ENCODE measurements at regions of chr16 and their contacts with region 1.

Region 1: DNA sequence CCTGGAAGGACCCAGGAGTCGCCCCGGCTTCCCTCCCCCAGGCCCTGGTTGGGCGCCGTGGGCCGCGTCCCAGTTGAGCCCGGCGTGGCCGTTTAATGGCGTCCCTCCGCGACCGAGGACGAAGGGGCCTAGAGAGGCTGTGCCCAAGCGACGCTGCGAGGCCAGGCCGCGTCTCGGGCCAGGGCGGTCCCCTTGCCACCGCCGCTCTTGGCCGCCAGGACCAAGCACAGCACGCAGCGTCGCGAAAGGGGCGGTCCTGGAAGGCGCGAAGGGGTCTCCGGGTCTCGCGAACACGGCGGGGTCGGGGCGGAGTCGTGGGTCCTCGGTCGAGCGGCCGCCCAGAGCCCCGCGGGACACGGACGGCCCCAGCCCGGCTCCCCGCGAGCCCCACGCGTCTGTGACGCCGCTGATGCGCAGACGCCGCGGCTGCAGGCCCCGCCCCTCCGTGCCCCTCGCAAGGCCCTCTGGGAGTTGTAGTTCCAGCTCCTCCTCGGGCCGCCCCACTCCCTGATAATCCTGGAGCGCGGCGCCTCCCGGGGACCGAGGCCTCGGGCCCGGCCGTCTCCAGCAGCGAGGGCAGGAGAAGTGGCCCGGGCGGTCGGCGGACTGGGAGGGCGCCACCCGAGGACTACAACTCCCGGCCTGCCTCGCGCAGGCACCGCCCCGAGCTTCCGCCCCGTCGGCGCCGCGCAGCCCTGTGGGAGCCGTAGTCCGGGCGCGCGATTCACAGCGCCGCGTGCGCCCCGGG is at the start of gene CAPN15:
- DNase-seq: peak; percentile 81
- H3K4me3 ChIP-seq: peak within 1 kb of the TSS; percentile 47 to 66
- H3K27ac ChIP-seq: peak within 1 kb of the TSS; percentile 96 to 97
- H3K4me1 ChIP-seq: peaks cover 22% of the 10 kb centered on the region
- H3K27me3 ChIP-seq: no peaks in the 10 kb centered on the region
- CTCF ChIP-seq: peak in 2 of 4 experiments; percentile 40 to 51
- POLR2A ChIP-seq: peak; percentile 82
- total RNA-seq, gene CAPN15: 59.7 to 80.7 TPM

Region 2: DNA sequence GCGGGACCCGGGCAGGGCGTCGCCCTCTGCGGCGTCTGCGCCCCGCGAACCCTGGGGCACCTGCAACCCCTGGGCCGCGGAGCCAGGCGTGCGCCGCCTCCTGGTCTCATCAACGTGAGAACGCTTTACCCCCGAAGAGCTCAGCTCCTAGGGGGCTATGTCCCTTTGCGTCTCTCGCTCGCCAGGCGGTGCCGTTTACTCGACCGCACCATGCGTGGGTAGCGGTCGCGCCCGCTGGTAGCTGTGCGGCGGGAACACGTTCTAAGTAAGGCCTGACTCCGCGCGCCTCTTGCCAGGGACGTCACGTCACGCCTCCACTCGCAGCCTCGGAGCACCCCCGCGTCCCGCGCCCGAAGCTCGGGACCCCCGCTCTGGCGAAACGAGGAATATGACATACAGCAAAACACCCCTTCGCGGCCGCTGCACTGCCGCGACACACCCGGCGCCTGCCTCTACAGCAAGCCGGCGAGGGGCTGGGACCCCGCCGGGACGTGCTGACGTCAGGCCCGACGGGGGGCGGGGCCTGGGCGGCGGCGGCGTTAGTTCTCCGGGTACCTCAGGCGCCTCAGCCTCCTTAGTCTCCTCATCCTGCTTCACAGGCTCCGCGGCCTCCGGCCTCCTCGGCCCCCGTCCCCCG is 102.0 kb before region 1 on chr16 and contains the start of gene RAB11FIP3:
- intact Hi-C with region 1: loop called (anchors 2 kb)
- DNase-seq: peak; percentile 78
- H3K4me3 ChIP-seq: peak within 1 kb of the TSS; percentile 54 to 62
- H3K27ac ChIP-seq: peak within 1 kb of the TSS; percentile 90 to 96
- H3K4me1 ChIP-seq: peaks cover 7% of the 10 kb centered on the region
- H3K27me3 ChIP-seq: no peaks in the 10 kb centered on the region
- CTCF ChIP-seq: peak in 3 of 4 experiments; percentile 21 to 31 (median 31)
- POLR2A ChIP-seq: peak; percentile 60
- total RNA-seq, gene RAB11FIP3: 33.2 to 93.2 TPM

Region 3: DNA sequence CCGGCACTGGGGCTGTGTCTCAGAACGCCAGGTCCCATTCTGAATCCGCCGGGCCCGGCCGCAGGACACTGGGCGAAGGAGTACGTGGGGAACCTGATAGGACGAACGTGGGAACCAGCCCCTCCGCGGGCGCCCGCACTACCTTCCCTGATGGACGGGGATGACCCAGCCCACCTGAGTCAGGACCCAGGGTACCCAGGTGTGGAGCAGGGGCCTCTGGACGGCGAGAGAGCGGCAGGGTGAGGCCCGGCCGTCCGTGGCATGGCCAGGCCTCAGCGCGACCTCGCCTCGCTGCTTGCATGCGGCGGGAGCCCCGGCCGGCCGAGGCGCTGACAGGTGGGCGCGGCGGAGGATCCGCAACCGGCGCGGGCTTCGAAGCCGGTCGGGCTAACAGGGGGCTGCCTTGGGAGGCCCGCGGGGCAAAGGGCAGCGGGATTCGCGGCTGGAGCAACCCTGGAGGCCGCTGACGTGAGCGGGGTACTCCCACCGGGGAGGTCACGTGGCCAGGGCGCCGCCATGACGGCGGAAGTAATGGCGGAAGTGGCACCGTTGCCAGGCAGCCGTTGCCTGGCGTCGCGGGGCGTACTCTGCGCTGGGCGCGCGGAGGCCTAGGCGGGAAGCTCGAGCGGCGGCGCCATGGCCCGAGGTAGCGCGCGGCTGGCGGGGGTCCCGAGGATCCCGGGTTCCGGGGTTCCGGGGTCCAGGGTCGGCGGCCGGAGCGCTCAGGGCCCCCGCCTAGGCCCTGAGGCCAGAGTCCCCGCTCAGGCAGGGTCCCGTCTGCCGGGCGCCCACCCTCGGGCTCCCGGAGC is 121.8 kb after region 1 on chr16 and contains the start of gene WDR90:
- intact Hi-C with region 1: no loop called
- DNase-seq: peak; percentile 91
- H3K4me3 ChIP-seq: peak within 1 kb of the TSS; percentile 52 to 77
- H3K27ac ChIP-seq: peak within 1 kb of the TSS; percentile 74 to 89
- H3K4me1 ChIP-seq: peaks cover 18% of the 10 kb centered on the region
- H3K27me3 ChIP-seq: no peaks in the 10 kb centered on the region
- CTCF ChIP-seq: peak in 1 of 4 experiments; percentile 28
- POLR2A ChIP-seq: peak; percentile 43
- total RNA-seq, gene WDR90: 36.8 to 60.4 TPM